ENCODE measurements at regions of chr19 and their contacts with region 1.

Region 1: GRCh38 chr19:45200568-45200994 is 22.0 kb downstream of the BLOC1S3 start:
- DNase-seq: peak; percentile 59
- H3K4me3 Mint-ChIP-seq: no peak overlapping the region
- H3K27ac Mint-ChIP-seq: no peak overlapping the region
- H3K4me1 Mint-ChIP-seq: no peaks in the 10 kb centered on the region
- H3K27me3 Mint-ChIP-seq: peaks cover 41% of the 10 kb centered on the region
- CTCF ChIP-seq: no peak

Region 2: DNA sequence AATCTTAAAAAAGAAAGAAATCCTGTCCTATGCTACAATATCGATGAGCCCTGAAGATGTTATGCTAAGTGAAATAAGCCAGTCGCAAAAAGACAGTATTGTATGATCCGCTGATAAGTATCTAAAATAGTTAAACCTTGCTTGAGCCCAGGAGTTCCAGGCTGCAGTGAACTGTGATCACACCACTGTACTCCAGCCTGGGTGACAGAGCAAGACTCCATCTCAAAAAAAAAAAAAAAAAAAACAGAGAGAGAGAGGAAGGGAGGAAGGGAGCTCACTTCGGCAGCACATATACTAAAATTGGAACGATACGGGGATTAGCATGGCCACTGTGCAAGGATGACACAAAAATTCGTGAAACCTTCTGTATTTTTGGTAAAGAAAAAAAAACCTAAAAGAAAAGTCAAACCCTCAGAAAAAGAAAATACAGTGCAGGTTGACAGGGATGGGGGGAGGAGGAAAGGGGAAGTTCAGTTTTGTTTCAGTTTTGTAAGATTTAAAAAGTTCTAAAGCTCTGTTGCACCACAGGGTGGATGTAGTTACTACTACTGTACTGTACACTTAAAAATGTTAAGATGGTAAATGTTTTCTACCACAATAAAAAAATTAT is 153.3 kb before region 1 on chr19:
- CTCF ChIA-PET with region 1: no interaction called
- intact Hi-C with region 1: no loop called
- DNase-seq: no peak
- H3K4me3 Mint-ChIP-seq: no peak overlapping the region
- H3K27ac Mint-ChIP-seq: no peak overlapping the region
- H3K4me1 Mint-ChIP-seq: no peaks in the 10 kb centered on the region
- H3K27me3 Mint-ChIP-seq: no peaks in the 10 kb centered on the region
- CTCF ChIP-seq: no peak

Region 3: GRCh38 chr19:45276284-45276687 is 75.7 kb after region 1 on chr19:
- CTCF ChIA-PET with region 1: no interaction called
- intact Hi-C with region 1: no loop called
- DNase-seq: no peak
- H3K4me3 Mint-ChIP-seq: no peak overlapping the region
- H3K27ac Mint-ChIP-seq: no peak overlapping the region
- H3K4me1 Mint-ChIP-seq: no peaks in the 10 kb centered on the region
- H3K27me3 Mint-ChIP-seq: no peaks in the 10 kb centered on the region
- CTCF ChIP-seq: no peak

Region 4: DNA sequence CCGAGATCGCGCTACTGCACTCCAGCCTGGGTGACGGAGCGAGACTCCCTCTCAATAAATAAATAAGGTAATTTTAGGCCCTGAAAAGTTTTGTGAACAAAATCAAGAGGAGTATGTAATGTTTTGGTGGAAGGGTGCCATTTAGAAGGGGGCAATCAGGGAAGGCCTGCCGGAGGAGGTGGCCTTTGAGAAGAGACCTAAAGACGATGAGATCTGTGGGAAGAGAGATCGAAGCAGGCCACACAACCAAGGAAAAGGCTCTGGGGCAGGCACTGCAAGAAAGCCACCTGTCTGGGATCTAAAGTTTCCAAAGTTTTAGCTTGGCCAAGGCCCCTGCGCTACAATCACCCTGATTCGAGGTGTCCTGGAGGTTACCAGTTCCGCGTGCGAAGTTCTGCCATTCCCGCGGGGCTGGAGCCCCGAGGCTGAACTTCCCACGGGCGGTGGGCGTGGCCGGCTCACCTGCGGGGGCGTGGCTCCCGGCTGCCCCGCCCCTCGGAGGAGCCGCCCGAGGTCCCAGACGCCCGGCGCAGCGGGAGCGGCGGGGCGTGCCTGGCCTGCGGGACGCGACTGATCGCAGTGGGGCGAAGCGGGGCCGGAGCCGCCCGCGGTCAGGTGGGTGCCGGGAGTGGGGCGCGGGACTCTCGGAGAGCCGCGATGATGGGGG is 139.8 kb after region 1 on chr19 and contains the start of gene KLC3:
- CTCF ChIA-PET with region 1: interaction called, 5 read pairs
- intact Hi-C with region 1: loop called (anchors 1 kb)
- DNase-seq: peak; percentile 84
- H3K4me3 Mint-ChIP-seq: no peak within 1 kb of the TSS
- H3K27ac Mint-ChIP-seq: peak within 1 kb of the TSS; percentile 71
- H3K4me1 Mint-ChIP-seq: no peaks in the 10 kb centered on the region
- H3K27me3 Mint-ChIP-seq: no peaks in the 10 kb centered on the region
- CTCF ChIP-seq: no peak
- total RNA-seq, gene KLC3: 3.3 and 4.5 TPM in 2 replicates

Measured in Calu3 (cell line).